HCT116 (cell line): ENCODE measurements at regions of chr7 and their contacts with region 1.

Region 1: GRCh38 chr7:16071246-16071857 is 350.0 kb downstream of the CRPPA start:
- DNase-seq: peak; percentile 54
- ATAC-seq: peak; percentile 79
- H3K4me3 ChIP-seq: no peak overlapping the region
- H3K27ac ChIP-seq: no peak overlapping the region
- H3K4me1 ChIP-seq: peaks cover 0 to 5% of the 10 kb centered on the region in 2 experiments; a peak in 2 of 4 replicates
- H3K27me3 ChIP-seq: no peaks in the 10 kb centered on the region
- CTCF ChIP-seq: peak; percentile 55 to 75 (median 64)
- POLR2A ChIP-seq: no peak
- RAD21 ChIP-seq: peak; percentile 84

Region 2: DNA sequence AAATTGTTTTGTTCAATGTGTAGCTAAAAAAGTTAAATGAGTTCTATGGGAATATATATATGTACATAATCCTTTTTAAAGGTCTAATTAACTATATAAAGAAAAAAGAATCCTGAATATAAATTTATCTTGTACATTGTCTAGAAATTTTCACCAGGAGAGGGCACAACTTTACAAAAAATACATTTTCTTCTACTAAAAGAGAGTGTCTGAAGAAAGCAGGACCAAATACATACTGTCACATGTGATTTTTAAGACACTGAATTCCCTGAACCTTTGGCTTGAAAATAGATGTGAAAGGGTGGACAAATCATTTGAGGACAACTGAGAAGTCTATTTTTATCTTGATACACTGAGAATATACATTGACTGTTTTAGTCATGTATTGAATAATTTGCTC is 1373.1 kb before region 1 on chr7:
- CTCF ChIA-PET with region 1: no interaction called
- POLR2A ChIA-PET with region 1: no interaction called
- RAD21 ChIA-PET with region 1: no interaction called
- intact Hi-C with region 1: loop called (anchors 5 kb)
- DNase-seq: no peak
- ATAC-seq: no peak
- H3K4me3 ChIP-seq: no peak overlapping the region
- H3K27ac ChIP-seq: no peak overlapping the region
- H3K4me1 ChIP-seq: no peaks in the 10 kb centered on the region
- H3K27me3 ChIP-seq: no peaks in the 10 kb centered on the region
- CTCF ChIP-seq: peak in 2 of 3 experiments; percentile 23 to 29; a peak in 2 of 6 replicates
- POLR2A ChIP-seq: no peak
- RAD21 ChIP-seq: peak; percentile 45; the same call in 1 of the 2 replicates

Region 3: GRCh38 chr7:14717816-14718215 is 1353.5 kb before region 1 on chr7:
- CTCF ChIA-PET with region 1: no interaction called
- POLR2A ChIA-PET with region 1: no interaction called
- RAD21 ChIA-PET with region 1: no interaction called
- intact Hi-C with region 1: loop called (anchors 2 kb)
- DNase-seq: no peak
- ATAC-seq: no peak
- H3K4me3 ChIP-seq: no peak overlapping the region
- H3K27ac ChIP-seq: no peak overlapping the region
- H3K4me1 ChIP-seq: peaks cover 0 to 10% of the 10 kb centered on the region in 2 experiments; a peak in 2 of 4 replicates
- H3K27me3 ChIP-seq: no peaks in the 10 kb centered on the region
- CTCF ChIP-seq: peak; percentile 30 to 64 (median 52); a peak in 4 of 6 replicates
- POLR2A ChIP-seq: no peak
- RAD21 ChIP-seq: peak; percentile 77

Region 4: GRCh38 chr7:15015545-15016326 is 1055.6 kb before region 1 on chr7:
- CTCF ChIA-PET with region 1: no interaction called
- POLR2A ChIA-PET with region 1: no interaction called
- RAD21 ChIA-PET with region 1: no interaction called
- intact Hi-C with region 1: loop called (anchors 10 kb)
- DNase-seq: peak; percentile 87
- ATAC-seq: peak; percentile 96
- H3K4me3 ChIP-seq: peak overlapping the region; percentile 7 to 26; a peak in 2 of 4 replicates
- H3K27ac ChIP-seq: peak overlapping the region; percentile 22; the same call in 1 of the 2 replicates
- H3K4me1 ChIP-seq: peaks cover 6 to 21% of the 10 kb centered on the region in 2 experiments; a peak in 3 of 4 replicates
- H3K27me3 ChIP-seq: no peaks in the 10 kb centered on the region
- CTCF ChIP-seq: peak; percentile 54 to 72 (median 67); a peak in 5 of 6 replicates
- POLR2A ChIP-seq: no peak
- RAD21 ChIP-seq: peak; percentile 79

Region 5: DNA sequence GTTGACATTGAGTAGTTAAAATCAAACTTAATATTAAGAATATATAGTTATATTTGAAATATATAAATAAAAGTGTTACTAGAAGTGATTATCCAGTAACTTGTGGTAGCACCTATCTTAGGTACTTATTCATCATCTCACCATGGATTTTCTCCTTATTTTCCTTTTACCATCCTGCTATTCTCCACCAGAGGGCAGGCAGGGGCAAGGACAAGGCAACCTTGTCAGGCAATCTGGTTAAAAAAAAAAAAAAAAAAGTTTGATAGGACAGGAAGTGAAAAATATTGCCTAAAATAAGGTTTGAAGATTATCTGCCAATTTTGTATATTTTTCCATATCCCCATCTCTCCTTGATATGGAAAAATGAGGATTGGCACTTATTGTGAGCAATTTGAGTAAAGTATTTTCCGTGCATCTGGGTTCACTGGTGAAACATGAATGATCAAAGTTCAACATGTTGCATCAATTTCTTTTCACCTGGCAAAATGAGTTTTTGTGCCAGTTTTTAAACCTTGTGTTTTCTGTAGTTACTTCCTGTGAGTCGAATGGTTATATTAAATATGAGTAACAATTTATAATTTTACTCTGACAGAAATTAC is 766.3 kb before region 1 on chr7:
- CTCF ChIA-PET with region 1: no interaction called
- POLR2A ChIA-PET with region 1: no interaction called
- RAD21 ChIA-PET with region 1: no interaction called
- intact Hi-C with region 1: loop called (anchors 1 kb)
- DNase-seq: peak; percentile 33
- ATAC-seq: peak; percentile 73
- H3K4me3 ChIP-seq: no peak overlapping the region
- H3K27ac ChIP-seq: no peak overlapping the region
- H3K4me1 ChIP-seq: no peaks in the 10 kb centered on the region
- H3K27me3 ChIP-seq: no peaks in the 10 kb centered on the region
- CTCF ChIP-seq: peak; percentile 49 to 73 (median 63); a peak in 5 of 6 replicates
- POLR2A ChIP-seq: no peak
- RAD21 ChIP-seq: peak; percentile 73

Region 6: DNA sequence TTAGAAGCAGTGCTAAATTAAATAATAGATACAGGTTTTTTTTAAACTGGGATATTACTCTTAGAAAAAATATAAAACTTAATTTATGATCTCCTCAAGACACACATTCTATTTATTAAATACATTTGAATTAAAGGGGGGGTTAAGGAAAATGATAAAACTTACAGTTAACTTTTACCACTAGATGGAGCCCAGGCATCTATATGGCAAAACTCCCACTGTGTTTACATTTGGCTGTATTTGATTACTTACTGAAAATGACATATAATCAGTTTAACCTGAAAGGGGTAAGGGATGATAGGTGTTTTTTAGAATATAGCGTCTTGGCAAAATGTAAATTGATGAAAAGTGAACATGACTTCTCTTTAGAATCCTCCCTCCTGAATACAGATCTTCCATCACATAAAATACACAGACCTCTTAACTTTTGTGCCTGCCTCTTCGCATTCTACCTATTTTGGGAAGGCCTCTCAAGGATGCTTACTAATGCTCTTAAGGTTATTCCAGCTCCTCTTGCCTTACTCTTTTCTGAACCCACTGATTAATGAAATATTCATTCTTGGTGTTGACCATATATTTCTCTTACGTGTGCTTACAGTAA is 745.2 kb before region 1 on chr7:
- CTCF ChIA-PET with region 1: no interaction called
- POLR2A ChIA-PET with region 1: no interaction called
- RAD21 ChIA-PET with region 1: no interaction called
- intact Hi-C with region 1: loop called (anchors 1 kb)
- DNase-seq: peak; percentile 34
- ATAC-seq: peak; percentile 60; the same call in 1 of the 2 replicates
- H3K4me3 ChIP-seq: no peak overlapping the region
- H3K27ac ChIP-seq: no peak overlapping the region
- H3K4me1 ChIP-seq: no peaks in the 10 kb centered on the region
- H3K27me3 ChIP-seq: no peaks in the 10 kb centered on the region
- CTCF ChIP-seq: peak; percentile 52 to 63 (median 57); a peak in 5 of 6 replicates
- POLR2A ChIP-seq: no peak
- RAD21 ChIP-seq: peak; percentile 74

Region 7: DNA sequence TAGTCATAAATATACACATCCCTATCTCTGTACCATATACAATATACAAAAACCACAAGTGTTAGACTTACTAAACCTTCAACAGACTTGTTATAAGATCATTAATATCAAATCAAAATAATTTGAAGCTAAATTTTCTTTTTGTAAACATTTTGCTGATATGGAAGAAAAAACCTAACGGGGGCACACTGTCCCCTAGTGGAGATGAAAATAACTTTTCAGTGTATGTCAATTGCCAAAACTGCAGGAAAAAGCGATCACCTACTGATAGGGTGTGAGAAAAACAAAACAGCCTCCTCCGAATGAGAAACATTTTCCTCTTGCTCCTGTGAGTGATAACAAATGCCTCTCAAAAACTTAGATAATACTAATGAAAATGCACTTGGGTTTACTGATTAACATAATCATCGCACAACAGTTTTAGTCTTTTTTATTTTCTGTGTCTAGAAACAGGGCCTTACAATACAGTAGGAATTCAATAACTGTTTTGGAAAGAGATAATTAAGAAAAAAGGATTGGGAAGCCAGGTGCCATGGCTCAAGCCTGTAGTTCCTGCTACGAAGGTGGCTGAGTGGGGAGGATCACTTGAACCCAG is 27.3 kb after region 1 on chr7:
- CTCF ChIA-PET with region 1: interaction called, 10 read pairs
- POLR2A ChIA-PET with region 1: no interaction called
- RAD21 ChIA-PET with region 1: no interaction called
- intact Hi-C with region 1: no loop called
- DNase-seq: peak; percentile 32
- ATAC-seq: peak; percentile 78
- H3K4me3 ChIP-seq: no peak overlapping the region
- H3K27ac ChIP-seq: no peak overlapping the region
- H3K4me1 ChIP-seq: peaks cover 0 to 6% of the 10 kb centered on the region in 2 experiments; a peak in 3 of 4 replicates
- H3K27me3 ChIP-seq: no peaks in the 10 kb centered on the region
- CTCF ChIP-seq: peak; percentile 78 to 93 (median 78)
- POLR2A ChIP-seq: no peak
- RAD21 ChIP-seq: peak; percentile 74